Activated CD4-positive, alpha-beta T cell treated with anti-CD3 and anti-CD28 coated beads for 36 hours (primary cell): ENCODE measurements at regions of chr10 and their contacts with region 1.

Region 1: GRCh38 chr10:110414563-110415309 is 83.0 kb upstream of the DUSP5 start:
- DNase-seq: peak; percentile 93
- ATAC-seq: peak; percentile 94
- H3K4me3 Mint-ChIP-seq: peak overlapping the region; percentile 34
- H3K27ac Mint-ChIP-seq: peak overlapping the region; percentile 91
- H3K4me1 Mint-ChIP-seq: peaks cover 72% of the 10 kb centered on the region
- H3K27me3 Mint-ChIP-seq: no peaks in the 10 kb centered on the region

Region 2: DNA sequence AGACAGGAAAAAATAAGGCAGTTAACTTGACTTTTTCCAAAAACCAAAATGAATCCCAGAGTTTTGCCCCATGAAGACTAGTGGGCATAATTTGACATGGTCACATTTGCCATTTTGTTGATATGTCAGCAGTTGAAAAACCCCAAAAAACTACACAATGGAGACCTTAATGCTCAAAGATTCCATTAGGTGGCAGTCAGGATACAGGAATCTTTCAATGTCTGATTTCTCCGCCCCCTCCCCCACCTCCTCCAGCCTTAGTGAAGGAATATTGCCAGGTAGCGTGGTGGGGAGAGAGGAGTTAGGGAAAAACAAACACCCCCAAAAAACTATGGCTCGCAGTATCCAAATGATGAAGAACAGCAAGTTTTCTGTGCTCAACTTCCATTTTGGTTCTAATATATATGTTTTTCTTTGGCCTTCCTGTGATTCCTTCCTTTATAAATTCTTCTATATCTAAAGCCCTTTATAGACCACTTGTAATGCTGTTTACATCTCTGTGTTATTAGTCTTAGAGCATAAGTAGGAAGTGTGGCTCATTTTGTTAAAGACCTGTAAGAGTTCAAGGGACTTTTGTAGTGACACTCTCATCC is 103.3 kb before region 1 on chr10:
- CTCF ChIA-PET with region 1: interaction called, 3 read pairs
- POLR2A ChIA-PET with region 1: no interaction called
- intact Hi-C with region 1: loop called (anchors 1 to 5 kb)
- DNase-seq: peak; percentile 61
- ATAC-seq: peak; percentile 70
- H3K4me3 Mint-ChIP-seq: no peak overlapping the region
- H3K27ac Mint-ChIP-seq: no peak overlapping the region
- H3K4me1 Mint-ChIP-seq: peaks cover 27% of the 10 kb centered on the region
- H3K27me3 Mint-ChIP-seq: peaks cover 2% of the 10 kb centered on the region

Region 3: GRCh38 chr10:110425684-110426293 is 11.1 kb after region 1 on chr10:
- CTCF ChIA-PET with region 1: interaction called, 21 read pairs
- POLR2A ChIA-PET with region 1: interaction called, 9 read pairs
- intact Hi-C with region 1: loop called (anchors 1 kb)
- DNase-seq: peak; percentile 81
- ATAC-seq: peak; percentile 90
- H3K4me3 Mint-ChIP-seq: no peak overlapping the region
- H3K27ac Mint-ChIP-seq: peak overlapping the region; percentile 79
- H3K4me1 Mint-ChIP-seq: peaks cover 40% of the 10 kb centered on the region
- H3K27me3 Mint-ChIP-seq: no peaks in the 10 kb centered on the region

Region 4: DNA sequence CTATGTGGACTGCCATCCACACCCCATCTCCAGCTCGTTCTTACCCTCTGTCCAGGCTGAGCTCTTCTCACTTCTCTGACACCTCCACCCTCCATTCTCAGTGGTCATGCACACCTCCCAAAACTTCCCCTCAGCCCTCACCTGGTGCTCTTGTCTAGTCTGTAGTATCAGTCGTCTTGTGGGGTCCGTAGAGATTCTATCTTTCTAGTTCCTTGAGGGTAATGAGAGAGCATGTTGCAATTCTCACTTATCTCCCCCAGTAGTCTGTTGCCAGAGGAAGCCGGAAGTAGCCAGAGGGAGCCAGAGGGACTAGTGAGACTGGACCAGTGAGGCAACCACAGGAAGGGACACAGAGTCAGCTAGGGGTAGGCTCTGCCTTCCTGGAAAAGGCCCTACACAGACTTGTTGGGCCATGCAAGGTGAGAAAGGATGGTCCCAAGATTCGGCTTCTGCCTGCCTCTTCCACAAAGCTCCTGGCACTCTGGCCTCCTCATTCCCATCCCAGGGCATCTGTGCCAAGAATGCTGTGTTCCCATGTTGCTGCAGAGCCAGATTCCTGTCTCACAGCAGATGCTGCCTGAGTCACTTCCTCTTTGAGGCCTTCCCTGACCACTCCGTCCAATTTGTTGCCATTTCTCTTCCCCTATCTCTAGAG is 32.3 kb after region 1 on chr10:
- CTCF ChIA-PET with region 1: no interaction called
- POLR2A ChIA-PET with region 1: no interaction called
- intact Hi-C with region 1: no loop called
- DNase-seq: no peak
- ATAC-seq: no peak
- H3K4me3 Mint-ChIP-seq: no peak overlapping the region
- H3K27ac Mint-ChIP-seq: no peak overlapping the region
- H3K4me1 Mint-ChIP-seq: peaks cover 3% of the 10 kb centered on the region
- H3K27me3 Mint-ChIP-seq: peaks cover 5% of the 10 kb centered on the region

Region 5: GRCh38 chr10:110535958-110536891 is 121.5 kb after region 1 on chr10:
- CTCF ChIA-PET with region 1: no interaction called
- POLR2A ChIA-PET with region 1: no interaction called
- intact Hi-C with region 1: loop called (anchors 1 kb)
- DNase-seq: peak; percentile 87
- ATAC-seq: peak; percentile 93
- H3K4me3 Mint-ChIP-seq: peak overlapping the region; percentile 15
- H3K27ac Mint-ChIP-seq: peak overlapping the region; percentile 79
- H3K4me1 Mint-ChIP-seq: peaks cover 37% of the 10 kb centered on the region
- H3K27me3 Mint-ChIP-seq: peaks cover 3% of the 10 kb centered on the region

Region 6: GRCh38 chr10:110871298-110872084 is 456.8 kb after region 1 on chr10 and contains the start of gene PDCD4:
- CTCF ChIA-PET with region 1: no interaction called
- POLR2A ChIA-PET with region 1: interaction called, 3 read pairs
- intact Hi-C with region 1: loop called in 1 of 2 experiments (anchors 10 kb)
- DNase-seq: peak; percentile 97
- ATAC-seq: peak; percentile 85
- H3K4me3 Mint-ChIP-seq: peak within 1 kb of the TSS; percentile 87
- H3K27ac Mint-ChIP-seq: peak within 1 kb of the TSS; percentile 95
- H3K4me1 Mint-ChIP-seq: peaks cover 63% of the 10 kb centered on the region
- H3K27me3 Mint-ChIP-seq: no peaks in the 10 kb centered on the region
- total RNA-seq, gene PDCD4: 69.8 to 125 TPM